Endothelial cell of umbilical vein (primary cell): ENCODE measurements at regions of chr12 and their contacts with region 1.

Region 1: DNA sequence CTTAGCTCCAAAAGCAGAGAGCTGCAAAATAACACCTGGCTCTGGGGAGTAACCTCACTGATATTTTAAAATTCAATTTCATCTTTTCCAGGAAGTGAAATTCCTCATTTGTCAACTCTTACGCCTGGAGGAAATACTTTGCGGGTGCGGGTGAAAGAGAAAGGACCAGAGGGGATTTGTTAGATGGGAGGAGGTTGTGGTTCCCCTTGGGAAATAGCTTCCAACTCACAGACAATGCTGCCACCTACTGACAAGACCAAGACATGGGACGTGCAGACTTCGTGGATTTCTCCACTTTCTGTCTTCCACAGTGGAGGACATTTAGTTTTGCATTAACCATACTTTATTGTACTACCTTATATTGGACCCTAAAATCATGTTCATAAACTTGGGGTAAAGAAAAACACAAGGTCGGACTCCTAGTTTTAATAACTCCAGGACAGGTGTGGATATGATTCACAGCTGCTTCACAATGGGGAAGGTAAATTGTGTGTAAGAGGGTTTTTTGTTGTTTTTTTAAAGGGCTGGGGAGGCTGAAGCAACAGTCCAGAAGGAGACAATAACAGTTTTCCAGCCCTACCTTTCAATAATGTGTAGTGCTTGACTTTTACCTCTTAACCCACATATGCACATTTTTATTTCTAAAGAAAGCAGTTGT is 10.8 kb downstream of the FBXL14 start:
- DNase-seq: peak; percentile 80
- H3K4me3 ChIP-seq: no peak overlapping the region
- H3K27ac ChIP-seq: no peak overlapping the region
- H3K4me1 ChIP-seq: peaks cover 6% of the 10 kb centered on the region
- H3K27me3 ChIP-seq: no peaks in the 10 kb centered on the region
- CTCF ChIP-seq: peak; percentile 74 to 79
- POLR2A ChIP-seq: no peak

Region 2: GRCh38 chr12:575948-576612 is 1007.5 kb before region 1 on chr12:
- CTCF ChIA-PET with region 1: interaction called, 12 read pairs
- POLR2A ChIA-PET with region 1: no interaction called
- dilution Hi-C with region 1: no loop called
- intact Hi-C with region 1: loop called (anchors 2 kb)
- DNase-seq: peak; percentile 56
- H3K4me3 ChIP-seq: no peak overlapping the region
- H3K27ac ChIP-seq: no peak overlapping the region
- H3K4me1 ChIP-seq: peaks cover 22% of the 10 kb centered on the region
- H3K27me3 ChIP-seq: no peaks in the 10 kb centered on the region
- CTCF ChIP-seq: peak; percentile 94 to 98
- POLR2A ChIP-seq: no peak

Region 3: GRCh38 chr12:818733-819132 is 764.8 kb before region 1 on chr12:
- CTCF ChIA-PET with region 1: interaction called, 29 read pairs
- POLR2A ChIA-PET with region 1: no interaction called
- dilution Hi-C with region 1: no loop called
- intact Hi-C with region 1: loop called (anchors 1 kb)
- DNase-seq: no peak
- H3K4me3 ChIP-seq: no peak overlapping the region
- H3K27ac ChIP-seq: no peak overlapping the region
- H3K4me1 ChIP-seq: no peaks in the 10 kb centered on the region
- H3K27me3 ChIP-seq: no peaks in the 10 kb centered on the region
- CTCF ChIP-seq: no peak
- POLR2A ChIP-seq: no peak

Region 4: GRCh38 chr12:949453-950191 is 633.9 kb before region 1 on chr12 and contains the start of gene RAD52:
- CTCF ChIA-PET with region 1: interaction called, 21 read pairs
- POLR2A ChIA-PET with region 1: no interaction called
- dilution Hi-C with region 1: no loop called
- intact Hi-C with region 1: loop called (anchors 1 kb)
- DNase-seq: peak; percentile 99
- H3K4me3 ChIP-seq: peak within 1 kb of the TSS; percentile 67 to 81 (median 76)
- H3K27ac ChIP-seq: peak within 1 kb of the TSS; percentile 41
- H3K4me1 ChIP-seq: peaks cover 15% of the 10 kb centered on the region
- H3K27me3 ChIP-seq: no peaks in the 10 kb centered on the region
- CTCF ChIP-seq: peak; percentile 93 to 97
- POLR2A ChIP-seq: no peak
- total RNA-seq, gene RAD52: 10.2 and 16.1 TPM in 2 replicates

Region 5: DNA sequence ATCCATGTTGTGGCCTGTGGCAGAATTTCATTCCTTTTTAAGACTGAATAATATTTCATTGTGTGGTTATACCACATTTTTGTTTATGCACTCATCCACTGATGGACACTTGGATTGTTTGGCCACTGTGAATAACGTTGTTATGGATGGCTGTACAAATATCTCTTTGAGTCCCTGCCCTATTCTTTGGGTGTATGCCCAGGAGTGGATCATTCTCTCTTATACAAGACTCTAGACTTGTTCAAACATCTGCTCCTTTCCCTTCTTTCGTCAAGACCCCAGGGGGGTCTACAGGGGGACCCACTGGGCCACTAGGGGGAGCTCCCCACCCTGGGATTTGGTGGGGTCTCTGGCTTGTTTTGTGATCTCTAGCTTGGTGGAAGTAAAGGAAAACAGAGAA is 66.5 kb before region 1 on chr12:
- CTCF ChIA-PET with region 1: interaction called, 3 read pairs
- POLR2A ChIA-PET with region 1: no interaction called
- dilution Hi-C with region 1: no loop called
- intact Hi-C with region 1: loop called (anchors 2 kb)
- DNase-seq: no peak
- H3K4me3 ChIP-seq: no peak overlapping the region
- H3K27ac ChIP-seq: no peak overlapping the region
- H3K4me1 ChIP-seq: no peaks in the 10 kb centered on the region
- H3K27me3 ChIP-seq: peaks cover 10 to 17% of the 10 kb centered on the region in 2 experiments
- CTCF ChIP-seq: peak; percentile 34 to 55
- POLR2A ChIP-seq: no peak

Region 6: DNA sequence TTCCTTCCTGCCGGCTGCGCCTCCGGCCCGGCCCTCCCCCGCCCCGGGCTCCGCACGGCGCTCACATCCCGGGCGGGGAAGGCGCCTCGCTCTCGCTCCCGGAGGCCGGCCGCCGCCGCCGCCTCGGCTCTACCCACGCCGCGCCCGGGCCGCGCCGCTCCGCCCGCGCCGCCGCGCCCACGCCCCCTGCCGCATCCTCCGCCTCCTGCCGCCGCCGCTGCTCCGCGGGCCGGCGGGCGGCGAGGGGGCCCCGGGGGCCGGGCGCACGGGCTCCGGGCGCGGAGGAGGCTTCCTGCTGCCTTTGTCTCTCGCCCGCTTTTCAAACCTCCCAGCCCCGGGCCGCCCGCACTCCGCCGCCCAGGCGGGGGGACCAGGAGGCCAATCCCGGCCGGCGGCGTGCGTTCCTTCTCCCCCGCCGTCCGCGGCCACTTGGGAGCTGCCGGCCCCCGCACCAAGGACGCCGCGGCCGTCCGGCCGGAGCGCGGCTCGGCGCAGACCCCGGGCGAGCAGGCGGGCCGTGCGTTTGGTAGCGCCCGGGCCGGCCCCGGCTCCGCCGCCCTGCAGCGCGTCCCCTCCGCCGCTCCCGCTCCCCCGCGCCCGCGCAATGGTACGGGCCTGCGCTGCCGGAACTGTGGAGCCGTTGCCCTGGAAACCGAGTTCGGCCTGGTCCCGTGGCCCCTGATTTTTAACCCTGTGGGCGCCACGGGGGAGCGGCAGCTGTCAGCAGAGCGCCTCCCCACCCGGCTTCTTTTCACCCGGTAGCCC is 10.9 kb after region 1 on chr12 and contains the start of gene FBXL14:
- CTCF ChIA-PET with region 1: interaction called, 33 read pairs
- POLR2A ChIA-PET with region 1: no interaction called
- dilution Hi-C with region 1: no loop called
- intact Hi-C with region 1: no loop called
- DNase-seq: peak; percentile 74
- H3K4me3 ChIP-seq: peak within 1 kb of the TSS; percentile 75 to 91 (median 77)
- H3K27ac ChIP-seq: peak within 1 kb of the TSS; percentile 71
- H3K4me1 ChIP-seq: peaks cover 40% of the 10 kb centered on the region
- H3K27me3 ChIP-seq: no peaks in the 10 kb centered on the region
- CTCF ChIP-seq: no peak
- POLR2A ChIP-seq: peak; percentile 72
- total RNA-seq, gene FBXL14: 10.2 and 11.3 TPM in 2 replicates

Region 7: GRCh38 chr12:1698638-1699214 is 115.2 kb after region 1 on chr12:
- CTCF ChIA-PET with region 1: no interaction called
- POLR2A ChIA-PET with region 1: no interaction called
- dilution Hi-C with region 1: no loop called
- intact Hi-C with region 1: no loop called
- DNase-seq: no peak
- H3K4me3 ChIP-seq: no peak overlapping the region
- H3K27ac ChIP-seq: no peak overlapping the region
- H3K4me1 ChIP-seq: no peaks in the 10 kb centered on the region
- H3K27me3 ChIP-seq: no peaks in the 10 kb centered on the region
- CTCF ChIP-seq: no peak
- POLR2A ChIP-seq: no peak